ENCODE measurements at regions of chr20 and their contacts with region 1.

Region 1: GRCh38 chr20:31572701-31573554 is 32.2 kb upstream of the ID1 start:
- DNase-seq: peak; percentile 73 to 85 (median 79)
- H3K4me3 ChIP-seq: peak overlapping the region; percentile 61 to 71
- H3K4me3 Mint-ChIP-seq: peak overlapping the region; percentile 87 to 95 (median 88)
- H3K27ac ChIP-seq: peak overlapping the region; percentile 71
- H3K27ac Mint-ChIP-seq: peak overlapping the region; percentile 86 to 96 (median 90)
- H3K4me1 ChIP-seq: peaks cover 14% of the 10 kb centered on the region
- H3K4me1 Mint-ChIP-seq: peaks cover 14 to 29% (median 19%) of the 10 kb centered on the region in 4 donors
- H3K27me3 ChIP-seq: no peaks in the 10 kb centered on the region
- H3K27me3 Mint-ChIP-seq: no peaks in the 10 kb centered on the region

Region 2: GRCh38 chr20:31446084-31446819 is 126.7 kb before region 1 on chr20:
- CTCF ChIA-PET with region 1: no interaction called
- POLR2A ChIA-PET with region 1: no interaction called
- intact Hi-C with region 1: no loop called
- DNase-seq: no peak
- H3K4me3 ChIP-seq: no peak overlapping the region
- H3K4me3 Mint-ChIP-seq: no peak overlapping the region
- H3K27ac ChIP-seq: no peak overlapping the region
- H3K27ac Mint-ChIP-seq: no peak overlapping the region
- H3K4me1 ChIP-seq: no peaks in the 10 kb centered on the region
- H3K4me1 Mint-ChIP-seq: no peaks in the 10 kb centered on the region
- H3K27me3 ChIP-seq: no peaks in the 10 kb centered on the region
- H3K27me3 Mint-ChIP-seq: peaks cover 4% of the 10 kb centered on the region in 2 donors

Region 3: GRCh38 chr20:31514159-31515071 is 58.5 kb before region 1 on chr20 and contains the start of gene HM13:
- CTCF ChIA-PET with region 1: interaction called, 4 read pairs
- POLR2A ChIA-PET with region 1: interaction called, 4 read pairs
- intact Hi-C with region 1: loop called (anchors 1 kb)
- DNase-seq: peak; percentile 86 to 89 (median 88)
- H3K4me3 ChIP-seq: peak within 1 kb of the TSS; percentile 58 to 90
- H3K4me3 Mint-ChIP-seq: peak within 1 kb of the TSS in 3 of 8 donors; percentile 10 to 83 (median 78)
- H3K27ac ChIP-seq: peak within 1 kb of the TSS; percentile 91
- H3K27ac Mint-ChIP-seq: peak within 1 kb of the TSS in 5 of 7 donors; percentile 30 to 92 (median 85)
- H3K4me1 ChIP-seq: peaks cover 43% of the 10 kb centered on the region
- H3K4me1 Mint-ChIP-seq: peaks cover 8 to 13% (median 11%) of the 10 kb centered on the region in 4 donors
- H3K27me3 ChIP-seq: no peaks in the 10 kb centered on the region
- H3K27me3 Mint-ChIP-seq: no peaks in the 10 kb centered on the region
- total RNA-seq, gene HM13: 133 to 156 TPM

Region 4: GRCh38 chr20:31547017-31547675 is 25.8 kb before region 1 on chr20:
- CTCF ChIA-PET with region 1: interaction called, 12 read pairs
- POLR2A ChIA-PET with region 1: interaction called, 19 read pairs
- intact Hi-C with region 1: no loop called
- DNase-seq: peak; percentile 80 to 88 (median 82)
- H3K4me3 ChIP-seq: peak overlapping the region; percentile 45 to 62
- H3K4me3 Mint-ChIP-seq: peak overlapping the region; percentile 89 to 96 (median 94)
- H3K27ac ChIP-seq: peak overlapping the region; percentile 87
- H3K27ac Mint-ChIP-seq: peak overlapping the region; percentile 97 to 100 (median 99)
- H3K4me1 ChIP-seq: peaks cover 21% of the 10 kb centered on the region
- H3K4me1 Mint-ChIP-seq: peaks cover 12 to 32% (median 21%) of the 10 kb centered on the region in 4 donors
- H3K27me3 ChIP-seq: no peaks in the 10 kb centered on the region
- H3K27me3 Mint-ChIP-seq: no peaks in the 10 kb centered on the region

Region 5: GRCh38 chr20:31560094-31560899 is 12.6 kb before region 1 on chr20:
- CTCF ChIA-PET with region 1: interaction called, 149 read pairs
- POLR2A ChIA-PET with region 1: interaction called, 9 read pairs
- intact Hi-C with region 1: loop called (anchors 1 kb)
- DNase-seq: peak; percentile 66 to 74 (median 71)
- H3K4me3 ChIP-seq: no peak overlapping the region
- H3K4me3 Mint-ChIP-seq: no peak overlapping the region
- H3K27ac ChIP-seq: no peak overlapping the region
- H3K27ac Mint-ChIP-seq: peak overlapping the region in 6 of 7 donors; percentile 10 to 62 (median 46)
- H3K4me1 ChIP-seq: peaks cover 9% of the 10 kb centered on the region
- H3K4me1 Mint-ChIP-seq: peaks cover 4 to 13% (median 9%) of the 10 kb centered on the region in 4 donors
- H3K27me3 ChIP-seq: no peaks in the 10 kb centered on the region
- H3K27me3 Mint-ChIP-seq: no peaks in the 10 kb centered on the region

Region 6: GRCh38 chr20:31605031-31605901 is 32.3 kb after region 1 on chr20 and contains the start of gene ID1:
- CTCF ChIA-PET with region 1: interaction called, 1,094 read pairs
- POLR2A ChIA-PET with region 1: interaction called, 58 read pairs
- intact Hi-C with region 1: loop called (anchors 1 kb)
- DNase-seq: peak; percentile 85 to 91 (median 86)
- H3K4me3 ChIP-seq: peak within 1 kb of the TSS; percentile 86 to 95
- H3K4me3 Mint-ChIP-seq: peak within 1 kb of the TSS; percentile 87 to 96 (median 92)
- H3K27ac ChIP-seq: peak within 1 kb of the TSS; percentile 26
- H3K27ac Mint-ChIP-seq: peak within 1 kb of the TSS; percentile 66 to 89 (median 84)
- H3K4me1 ChIP-seq: peaks cover 29% of the 10 kb centered on the region
- H3K4me1 Mint-ChIP-seq: peaks cover 10 to 37% (median 22%) of the 10 kb centered on the region in 4 donors
- H3K27me3 ChIP-seq: peaks cover 5% of the 10 kb centered on the region
- H3K27me3 Mint-ChIP-seq: peaks cover 24 to 34% of the 10 kb centered on the region in 2 donors
- total RNA-seq, gene ID1: 0.50 TPM in 1 of 2 experiments, not detected in the other

Region 7: DNA sequence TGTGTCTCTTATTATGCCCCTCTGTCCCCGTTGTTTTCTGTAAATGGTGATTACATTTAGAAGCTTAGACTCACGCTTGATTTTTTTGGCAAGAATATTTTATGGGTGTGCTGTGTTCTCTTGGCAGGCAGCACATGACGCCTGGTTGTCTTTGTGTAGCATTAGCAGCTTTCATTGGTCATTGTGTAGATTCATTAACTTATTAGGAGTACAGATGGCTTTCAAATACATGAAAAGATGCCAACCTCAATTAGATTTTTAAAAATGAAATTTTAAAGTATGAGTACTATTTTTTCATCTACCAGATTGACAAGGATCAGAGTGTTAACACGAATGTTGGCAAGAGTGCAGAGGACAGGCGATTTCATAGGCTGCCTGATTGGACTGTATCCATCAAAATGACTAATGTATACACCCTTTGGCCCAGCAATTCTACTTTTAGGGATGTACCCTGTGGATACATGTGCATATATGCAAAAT is 80.0 kb after region 1 on chr20:
- CTCF ChIA-PET with region 1: no interaction called
- POLR2A ChIA-PET with region 1: no interaction called
- intact Hi-C with region 1: no loop called
- DNase-seq: no peak
- H3K4me3 ChIP-seq: no peak overlapping the region
- H3K4me3 Mint-ChIP-seq: no peak overlapping the region
- H3K27ac ChIP-seq: no peak overlapping the region
- H3K27ac Mint-ChIP-seq: no peak overlapping the region
- H3K4me1 ChIP-seq: no peaks in the 10 kb centered on the region
- H3K4me1 Mint-ChIP-seq: no peaks in the 10 kb centered on the region
- H3K27me3 ChIP-seq: no peaks in the 10 kb centered on the region
- H3K27me3 Mint-ChIP-seq: peaks cover 0 to 4% of the 10 kb centered on the region in 2 donors

Measured in CD4-positive, alpha-beta memory T cell (primary cell).